ENCODE measurements at regions of chr4 and their contacts with region 1.

Region 1: GRCh38 chr4:83639849-83640493 is 104.1 kb downstream of the GPAT3 start:
- DNase-seq: no peak
- H3K4me3 ChIP-seq: no peak overlapping the region
- H3K27ac ChIP-seq: no peak overlapping the region
- H3K4me1 ChIP-seq: no peaks in the 10 kb centered on the region
- H3K27me3 ChIP-seq: no peaks in the 10 kb centered on the region
- CTCF ChIP-seq: peak; percentile 56 to 83 (median 64)
- POLR2A ChIP-seq: no peak

Region 2: GRCh38 chr4:83490876-83491450 is 149.0 kb before region 1 on chr4:
- intact Hi-C with region 1: loop called (anchors 10 kb)
- DNase-seq: no peak
- H3K4me3 ChIP-seq: no peak overlapping the region
- H3K27ac ChIP-seq: no peak overlapping the region
- H3K4me1 ChIP-seq: no peaks in the 10 kb centered on the region
- H3K27me3 ChIP-seq: no peaks in the 10 kb centered on the region
- CTCF ChIP-seq: peak in 2 of 3 experiments; percentile 15 to 29
- POLR2A ChIP-seq: no peak

Region 3: DNA sequence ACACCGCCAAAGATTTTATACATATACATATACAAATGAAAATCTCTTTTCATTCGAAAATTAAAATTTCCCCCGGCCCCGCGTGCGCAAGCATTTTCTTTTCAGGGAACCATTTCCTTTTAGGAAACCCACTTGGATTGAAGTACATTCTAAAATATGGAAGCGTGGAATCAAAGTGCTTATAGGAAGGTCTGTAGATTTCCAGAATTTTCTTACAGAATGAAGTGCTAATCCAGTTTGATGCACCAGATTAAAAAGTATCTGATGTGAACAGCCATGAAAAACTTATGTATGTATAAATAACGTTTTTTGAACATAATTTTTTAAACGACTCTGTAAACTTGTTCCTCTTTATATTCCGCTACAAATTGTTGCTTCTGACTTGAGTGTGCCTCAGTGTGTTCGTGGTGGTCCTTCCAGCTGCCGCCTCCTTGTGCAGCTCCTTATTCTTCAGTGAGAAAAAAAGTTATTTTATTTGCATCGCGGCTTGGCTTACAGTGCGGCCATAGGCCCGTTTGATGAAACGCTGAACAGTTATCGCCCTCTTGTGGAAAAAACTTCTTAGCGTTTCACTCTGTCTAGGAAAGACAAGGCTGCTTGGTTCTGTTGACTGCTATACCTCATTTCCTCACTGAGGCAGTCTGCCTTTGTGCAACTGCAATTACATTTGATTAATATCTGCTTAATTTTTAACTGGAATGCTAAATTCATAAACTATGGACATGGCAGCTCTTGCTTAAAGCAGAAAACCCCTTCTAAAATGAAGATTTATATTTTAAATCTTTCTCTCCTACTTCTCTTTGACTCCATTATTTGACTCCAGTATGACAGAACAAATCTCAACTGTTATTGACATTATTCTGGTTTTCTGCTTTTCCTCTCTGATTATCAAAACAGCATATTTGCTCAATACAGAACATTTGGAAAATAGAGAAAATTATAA is 863.8 kb after region 1 on chr4:
- intact Hi-C with region 1: loop called (anchors 5 kb)
- DNase-seq: no peak
- H3K4me3 ChIP-seq: no peak overlapping the region
- H3K27ac ChIP-seq: no peak overlapping the region
- H3K4me1 ChIP-seq: peaks cover 12% of the 10 kb centered on the region
- H3K27me3 ChIP-seq: peaks cover 38% of the 10 kb centered on the region
- CTCF ChIP-seq: peak in 1 of 3 experiments; percentile 25
- POLR2A ChIP-seq: no peak